Caco-2 (cell line): ENCODE measurements at regions of chr4 and their contacts with region 1.

Region 1: DNA sequence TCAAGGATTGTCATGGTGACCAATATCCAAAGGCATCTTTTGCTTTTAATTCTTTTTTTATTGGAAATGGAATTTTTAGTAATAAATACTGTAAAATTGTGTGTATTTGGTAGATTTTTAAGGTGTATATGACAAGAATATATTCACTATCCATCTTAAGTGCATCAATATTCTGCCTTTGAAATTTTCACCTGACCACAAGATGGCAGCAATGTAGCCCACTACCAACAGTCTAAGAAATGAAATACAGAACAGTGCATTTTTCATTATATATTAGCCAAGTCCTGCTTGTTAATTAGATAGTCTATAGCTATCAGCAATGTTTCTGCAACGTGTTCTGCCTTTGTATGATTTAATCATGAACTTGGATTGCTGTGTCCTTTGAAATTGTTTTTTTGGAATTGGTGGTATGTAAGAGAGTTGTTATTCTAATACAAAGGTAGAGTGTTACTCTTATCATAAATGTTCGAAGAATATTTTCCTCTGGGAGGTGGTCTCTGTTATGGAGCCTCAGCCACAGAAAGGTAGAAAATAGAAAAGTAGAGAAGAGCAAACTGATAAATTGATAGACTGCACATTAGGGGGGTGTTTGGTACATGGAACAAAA is 38.2 kb downstream of the HPGDS start:
- DNase-seq: peak in 1 of 2 experiments; percentile 41
- H3K4me3 ChIP-seq: no peak overlapping the region
- H3K4me3 Mint-ChIP-seq: no peak overlapping the region
- H3K27ac Mint-ChIP-seq: no peak overlapping the region
- H3K4me1 ChIP-seq: peaks cover 49% of the 10 kb centered on the region
- H3K4me1 Mint-ChIP-seq: peaks cover 29% of the 10 kb centered on the region
- H3K27me3 ChIP-seq: no peaks in the 10 kb centered on the region
- H3K27me3 Mint-ChIP-seq: no peaks in the 10 kb centered on the region
- CTCF ChIP-seq: peak; percentile 52 to 62

Region 2: GRCh38 chr4:94290245-94290644 is 14.2 kb before region 1 on chr4:
- CTCF ChIA-PET with region 1: no interaction called
- POLR2A ChIA-PET with region 1: no interaction called
- intact Hi-C with region 1: no loop called
- DNase-seq: no peak
- H3K4me3 ChIP-seq: no peak overlapping the region
- H3K4me3 Mint-ChIP-seq: no peak overlapping the region
- H3K27ac Mint-ChIP-seq: no peak overlapping the region
- H3K4me1 ChIP-seq: no peaks in the 10 kb centered on the region
- H3K4me1 Mint-ChIP-seq: peaks cover 12% of the 10 kb centered on the region
- H3K27me3 ChIP-seq: no peaks in the 10 kb centered on the region
- H3K27me3 Mint-ChIP-seq: no peaks in the 10 kb centered on the region
- CTCF ChIP-seq: no peak

Region 3: DNA sequence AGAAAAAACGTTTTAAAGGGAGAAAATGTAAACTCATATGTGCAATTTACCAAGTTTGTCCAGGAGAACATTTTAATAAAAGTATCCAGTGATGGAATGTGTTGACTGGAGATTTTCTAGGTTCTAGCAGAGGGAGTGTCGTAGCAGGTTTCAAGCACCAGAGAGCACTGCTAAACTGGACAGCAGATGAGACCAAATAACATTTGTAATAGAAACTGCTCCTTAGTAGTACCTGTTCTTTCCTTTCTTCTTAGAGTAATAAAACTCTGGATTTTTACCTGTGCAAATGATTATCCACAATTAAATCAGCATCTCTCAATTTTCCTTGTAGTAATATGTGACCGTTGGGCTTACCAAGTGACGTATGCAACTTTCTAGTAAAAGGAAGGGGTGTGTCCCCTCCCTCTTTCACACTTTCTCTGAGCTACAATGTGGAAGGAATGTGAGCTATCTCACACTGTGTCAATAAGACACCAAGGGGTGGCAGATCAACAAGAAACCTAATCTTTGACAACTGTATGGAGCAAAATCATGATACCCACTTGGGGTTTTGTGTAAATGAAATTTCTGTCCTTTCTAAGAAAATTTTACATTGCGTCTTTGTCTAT is 28.6 kb after region 1 on chr4:
- CTCF ChIA-PET with region 1: interaction called, 9 read pairs
- POLR2A ChIA-PET with region 1: no interaction called
- intact Hi-C with region 1: loop called (anchors 1 kb)
- DNase-seq: peak; percentile 50 to 51
- H3K4me3 ChIP-seq: no peak overlapping the region
- H3K4me3 Mint-ChIP-seq: peak overlapping the region; percentile 59
- H3K27ac Mint-ChIP-seq: peak overlapping the region; percentile 63
- H3K4me1 ChIP-seq: peaks cover 26% of the 10 kb centered on the region
- H3K4me1 Mint-ChIP-seq: peaks cover 18% of the 10 kb centered on the region
- H3K27me3 ChIP-seq: no peaks in the 10 kb centered on the region
- H3K27me3 Mint-ChIP-seq: no peaks in the 10 kb centered on the region
- CTCF ChIP-seq: peak; percentile 19 to 48